ENCODE measurements at regions of chr2 and their contacts with region 1.

Region 1: GRCh38 chr2:6909431-6910385 is 7.5 kb upstream of the RNF144A start:
- DNase-seq: no peak
- H3K4me3 ChIP-seq: no peak overlapping the region
- H3K27ac ChIP-seq: no peak overlapping the region
- H3K4me1 ChIP-seq: no peaks in the 10 kb centered on the region
- H3K27me3 ChIP-seq: peaks cover 26% of the 10 kb centered on the region

Region 2: GRCh38 chr2:6342273-6342920 is 567.3 kb before region 1 on chr2:
- in situ Hi-C with region 1: no loop called
- DNase-seq: no peak
- H3K4me3 ChIP-seq: no peak overlapping the region
- H3K27ac ChIP-seq: no peak overlapping the region
- H3K4me1 ChIP-seq: no peaks in the 10 kb centered on the region
- H3K27me3 ChIP-seq: no peaks in the 10 kb centered on the region

Region 3: GRCh38 chr2:7026742-7027141 is 117.0 kb after region 1 on chr2:
- in situ Hi-C with region 1: loop called (anchors 10 kb)
- DNase-seq: no peak
- H3K4me3 ChIP-seq: no peak overlapping the region
- H3K27ac ChIP-seq: no peak overlapping the region
- H3K4me1 ChIP-seq: peaks cover 10% of the 10 kb centered on the region; the same call in 1 of the 2 replicates
- H3K27me3 ChIP-seq: no peaks in the 10 kb centered on the region